CD14-positive monocyte (primary cell): ENCODE measurements at regions of chr11 and their contacts with region 1.

Region 1: GRCh38 chr11:32176223-32176934 is 85.5 kb downstream of the RCN1 start:
- DNase-seq: peak; percentile 61 to 69 (median 68)
- H3K4me3 ChIP-seq: no peak overlapping the region
- H3K4me3 Mint-ChIP-seq: no peak overlapping the region
- H3K27ac ChIP-seq: no peak overlapping the region
- H3K27ac Mint-ChIP-seq: no peak overlapping the region
- H3K4me1 ChIP-seq: no peaks in the 10 kb centered on the region
- H3K4me1 Mint-ChIP-seq: no peaks in the 10 kb centered on the region
- H3K27me3 ChIP-seq: no peaks in the 10 kb centered on the region
- H3K27me3 Mint-ChIP-seq: peaks cover under 1 to 11% (median 4%) of the 10 kb centered on the region in 3 donors
- CTCF ChIP-seq: peak; percentile 90

Region 2: DNA sequence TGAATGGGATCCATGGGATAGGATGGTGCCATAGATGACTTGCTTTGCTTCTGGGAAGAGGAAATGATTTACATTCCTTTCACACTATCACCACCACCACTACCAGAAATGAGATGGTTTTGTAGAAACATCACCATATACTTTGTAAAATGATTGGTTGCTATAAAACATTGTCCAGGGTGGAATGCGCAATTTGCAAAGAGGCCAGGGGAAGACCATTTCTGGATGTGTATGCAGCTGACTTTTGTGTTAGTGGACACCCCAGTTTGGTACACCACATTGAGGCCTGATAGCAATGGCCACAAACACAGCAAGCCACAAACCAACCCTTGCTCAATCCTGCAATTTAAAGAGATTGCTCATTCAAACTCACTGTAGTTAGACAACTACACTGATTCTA is 142.2 kb before region 1 on chr11:
- intact Hi-C with region 1: no loop called
- DNase-seq: peak in 1 of 3 donors; percentile 8
- H3K4me3 ChIP-seq: no peak overlapping the region
- H3K4me3 Mint-ChIP-seq: no peak overlapping the region
- H3K27ac ChIP-seq: peak overlapping the region in 1 of 2 donors; percentile 80
- H3K27ac Mint-ChIP-seq: no peak overlapping the region
- H3K4me1 ChIP-seq: peaks cover 19 to 40% of the 10 kb centered on the region in 2 donors
- H3K4me1 Mint-ChIP-seq: peaks cover 34% of the 10 kb centered on the region
- H3K27me3 ChIP-seq: no peaks in the 10 kb centered on the region
- H3K27me3 Mint-ChIP-seq: peaks cover 2 to 3% (median 2%) of the 10 kb centered on the region in 3 donors
- CTCF ChIP-seq: no peak

Region 3: DNA sequence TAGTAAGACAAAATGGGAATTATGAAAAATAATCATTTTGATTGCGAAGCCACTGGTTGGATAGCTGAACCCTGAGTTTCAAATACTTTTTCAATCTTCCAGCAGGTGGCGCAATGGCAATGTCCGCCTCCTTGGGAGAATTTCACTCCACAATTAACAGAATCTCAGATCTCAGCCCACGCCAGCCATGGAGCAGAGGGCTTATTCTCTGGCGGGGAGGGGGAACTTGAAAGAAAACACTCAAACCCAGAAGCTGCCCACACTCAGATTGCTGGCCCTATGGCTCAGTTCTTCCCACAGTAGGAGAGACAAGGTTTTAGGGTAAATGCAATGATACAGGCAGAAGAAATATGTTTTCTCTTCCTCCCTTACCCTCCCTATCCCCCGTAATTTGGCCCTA is 124.2 kb before region 1 on chr11:
- intact Hi-C with region 1: loop called (anchors 1 to 2 kb)
- DNase-seq: peak; percentile 31 to 50 (median 41)
- H3K4me3 ChIP-seq: no peak overlapping the region
- H3K4me3 Mint-ChIP-seq: no peak overlapping the region
- H3K27ac ChIP-seq: no peak overlapping the region
- H3K27ac Mint-ChIP-seq: no peak overlapping the region
- H3K4me1 ChIP-seq: peaks cover 5 to 11% of the 10 kb centered on the region in 2 donors
- H3K4me1 Mint-ChIP-seq: peaks cover 11% of the 10 kb centered on the region
- H3K27me3 ChIP-seq: no peaks in the 10 kb centered on the region
- H3K27me3 Mint-ChIP-seq: peaks cover 4 to 16% (median 5%) of the 10 kb centered on the region in 3 donors
- CTCF ChIP-seq: peak; percentile 79